ENCODE measurements at regions of chr15 and their contacts with region 1.

Region 1: GRCh38 chr15:45611305-45611704 is 23.5 kb upstream of the SQOR start:
- DNase-seq: peak in 1 of 2 donors; percentile 41
- ATAC-seq: no peak
- H3K4me3 ChIP-seq: no peak overlapping the region
- H3K4me3 Mint-ChIP-seq: no peak overlapping the region
- H3K27ac ChIP-seq: no peak overlapping the region
- H3K27ac Mint-ChIP-seq: no peak overlapping the region
- H3K4me1 ChIP-seq: no peaks in the 10 kb centered on the region
- H3K4me1 Mint-ChIP-seq: no peaks in the 10 kb centered on the region
- H3K27me3 ChIP-seq: no peaks in the 10 kb centered on the region
- H3K27me3 Mint-ChIP-seq: no peaks in the 10 kb centered on the region
- CTCF ChIP-seq: peak; percentile 40

Region 2: DNA sequence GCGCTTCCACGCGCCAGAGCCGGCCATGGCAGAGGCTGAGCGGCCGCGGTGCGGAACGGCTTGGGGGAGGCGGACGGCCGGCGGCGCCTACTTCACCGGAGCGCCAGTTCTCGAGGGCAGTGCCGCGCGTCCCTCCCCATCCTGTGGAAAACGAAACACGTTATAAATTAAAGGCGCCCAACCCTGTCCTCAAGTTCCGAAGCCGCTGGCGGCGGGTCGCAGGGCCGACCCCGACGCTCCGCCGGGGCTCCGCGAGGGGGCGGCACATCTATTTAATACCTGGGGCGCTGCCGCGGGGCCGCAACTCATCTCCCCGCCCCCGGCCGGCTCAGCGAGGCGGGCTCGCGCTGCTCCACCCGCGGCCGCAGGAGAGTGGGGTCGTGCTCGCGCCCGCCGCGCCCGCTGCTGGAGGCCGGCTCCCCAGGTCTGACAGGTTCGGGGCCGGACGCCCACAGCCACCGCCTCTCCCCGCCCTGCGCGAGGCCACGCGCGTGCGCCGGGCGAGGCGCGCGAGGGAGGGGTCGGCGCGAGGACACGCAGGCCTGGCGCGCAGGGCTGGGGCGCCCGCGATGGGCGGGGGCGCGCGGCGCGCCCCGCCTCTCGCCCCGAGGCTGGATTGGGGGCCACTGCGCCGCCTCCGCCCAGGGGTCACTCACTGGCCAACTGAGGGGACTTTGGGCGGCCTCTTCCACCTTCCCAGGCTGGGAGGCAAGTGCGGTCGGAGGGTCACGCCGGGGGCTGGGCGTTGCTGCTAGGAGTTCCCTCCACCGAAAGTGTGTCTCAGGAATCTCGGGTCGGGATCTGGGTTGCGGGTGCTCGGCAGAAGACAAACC is 88.8 kb before region 1 on chr15 and contains the start of gene SLC30A4:
- intact Hi-C with region 1: loop called (anchors 1 kb)
- DNase-seq: peak; percentile 69 to 82
- ATAC-seq: peak; percentile 87 to 93 (median 90)
- H3K4me3 ChIP-seq: peak within 1 kb of the TSS; percentile 75
- H3K4me3 Mint-ChIP-seq: peak within 1 kb of the TSS; percentile 96
- H3K27ac ChIP-seq: peak within 1 kb of the TSS; percentile 53
- H3K27ac Mint-ChIP-seq: peak within 1 kb of the TSS; percentile 84 to 90
- H3K4me1 ChIP-seq: peaks cover 7% of the 10 kb centered on the region
- H3K4me1 Mint-ChIP-seq: peaks cover 40 to 41% of the 10 kb centered on the region in 2 donors
- H3K27me3 ChIP-seq: no peaks in the 10 kb centered on the region
- H3K27me3 Mint-ChIP-seq: no peaks in the 10 kb centered on the region
- CTCF ChIP-seq: peak; percentile 43
- total RNA-seq, gene SLC30A4: 9.2 to 11.5 (median 9.5) TPM